Left cardiac atrium (tissue), 4 donors: ENCODE measurements at regions of chr5 and their contacts with region 1.

Region 1: DNA sequence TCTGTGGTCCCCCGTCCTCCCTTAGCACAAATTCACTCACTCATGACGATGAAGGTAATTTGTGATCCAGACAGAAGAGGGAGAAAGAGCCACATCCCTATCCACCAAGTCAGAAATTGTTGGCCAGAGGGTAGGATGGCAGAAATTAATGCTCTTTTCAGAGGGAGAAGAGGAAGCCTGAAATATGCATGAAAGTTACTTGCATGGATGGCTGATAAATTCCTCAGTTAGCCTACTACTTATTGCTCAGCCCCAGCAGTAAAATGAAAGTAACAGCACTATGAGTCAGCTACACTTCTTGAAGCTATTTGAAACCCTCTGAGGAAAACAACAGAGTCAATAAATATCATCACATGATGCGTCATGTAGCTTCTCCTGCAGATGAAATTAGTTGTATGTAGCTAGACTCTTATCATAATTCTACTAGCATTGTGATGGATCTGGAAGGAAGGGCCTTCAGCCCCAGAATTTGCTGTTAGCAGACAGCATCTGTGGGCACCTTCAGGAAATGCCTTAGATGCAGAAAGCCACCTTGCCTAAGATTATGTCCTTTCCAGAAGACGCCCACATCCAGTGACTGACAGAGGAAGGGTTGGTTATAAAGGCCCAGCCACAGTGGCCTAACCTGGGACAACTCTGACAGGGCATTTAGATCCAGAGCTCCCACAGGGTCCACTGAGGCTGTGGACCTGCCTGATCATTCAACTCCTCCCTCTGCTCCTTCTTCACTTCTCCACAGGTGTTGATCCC is 81.2 kb upstream of the CCDC112 start:
- DNase-seq: no peak
- ATAC-seq: peak; percentile 68 to 77

Region 2: DNA sequence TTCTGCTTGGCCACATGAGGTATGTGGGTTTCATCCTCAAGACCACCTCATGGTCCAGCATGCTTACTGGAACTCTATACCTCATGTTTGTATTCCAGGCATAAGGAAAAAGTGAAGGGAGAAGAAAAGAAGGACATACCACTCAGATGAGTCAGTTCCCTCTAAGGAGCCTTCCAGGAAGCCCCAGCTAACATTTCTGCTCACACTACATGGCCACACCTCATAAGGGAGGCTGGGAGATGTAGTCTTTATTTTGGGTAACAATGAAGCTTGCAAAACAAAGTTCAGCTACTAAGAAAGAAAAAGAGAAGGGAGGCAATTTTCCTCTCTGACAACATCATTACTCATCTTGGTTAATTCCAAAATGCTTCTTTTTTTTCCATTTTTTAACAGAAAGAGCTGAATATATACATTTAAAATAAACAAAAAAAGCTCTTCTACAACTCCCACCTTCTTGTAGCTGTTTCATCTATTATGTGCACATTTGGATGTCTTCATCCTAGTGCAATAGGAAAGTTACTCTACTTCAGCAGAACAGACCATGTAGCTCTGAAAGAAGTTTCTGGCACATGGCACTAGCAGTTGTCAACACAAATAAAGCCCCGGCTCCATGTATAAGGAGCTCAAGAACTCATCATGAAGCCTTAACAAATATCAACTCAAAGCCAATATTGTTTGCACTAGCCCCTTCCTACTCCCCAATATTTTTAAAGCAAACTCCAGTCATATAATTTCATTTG is 42.4 kb after region 1 on chr5:
- intact Hi-C with region 1: loop called in 1 of 2 experiments (anchors 5 kb)
- DNase-seq: no peak
- ATAC-seq: peak in 1 of 2 donors; percentile 84

Region 3: GRCh38 chr5:115544436-115545350 is 167.1 kb after region 1 on chr5 and contains the start of gene FEM1C:
- intact Hi-C with region 1: loop called in 1 of 2 experiments (anchors 5 kb)
- DNase-seq: peak; percentile 98
- ATAC-seq: peak; percentile 98 to 99
- total RNA-seq, gene FEM1C: 23.2 to 31.0 TPM

Region 4: DNA sequence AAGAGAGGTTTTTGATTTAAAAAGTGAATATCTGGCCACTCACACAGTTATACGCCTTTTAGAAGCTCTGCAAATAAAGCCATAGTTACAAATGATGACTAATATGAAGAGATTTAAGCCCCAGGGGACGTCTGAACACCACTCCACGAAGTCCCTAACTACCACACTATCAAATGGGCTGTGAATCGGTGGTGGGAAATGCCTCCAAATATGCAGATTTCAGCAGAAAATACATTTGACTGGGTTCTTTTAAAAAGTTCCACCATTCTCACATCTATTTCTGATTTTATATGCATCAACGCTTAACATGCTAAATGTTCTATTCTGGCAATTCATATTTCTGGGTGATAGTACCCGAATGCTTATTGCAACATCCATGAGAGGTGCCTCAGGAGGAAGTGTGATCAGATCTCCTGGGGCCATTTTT is 202.1 kb after region 1 on chr5:
- intact Hi-C with region 1: loop called in 1 of 2 experiments (anchors 5 kb)
- DNase-seq: no peak
- ATAC-seq: no peak

Region 5: GRCh38 chr5:115586601-115587048 is 209.0 kb after region 1 on chr5:
- intact Hi-C with region 1: loop called in 1 of 2 experiments (anchors 2 kb)
- DNase-seq: no peak
- ATAC-seq: no peak